Vagina (tissue), 2 donors: ENCODE measurements at regions of chr15 and their contacts with region 1.

Region 1: DNA sequence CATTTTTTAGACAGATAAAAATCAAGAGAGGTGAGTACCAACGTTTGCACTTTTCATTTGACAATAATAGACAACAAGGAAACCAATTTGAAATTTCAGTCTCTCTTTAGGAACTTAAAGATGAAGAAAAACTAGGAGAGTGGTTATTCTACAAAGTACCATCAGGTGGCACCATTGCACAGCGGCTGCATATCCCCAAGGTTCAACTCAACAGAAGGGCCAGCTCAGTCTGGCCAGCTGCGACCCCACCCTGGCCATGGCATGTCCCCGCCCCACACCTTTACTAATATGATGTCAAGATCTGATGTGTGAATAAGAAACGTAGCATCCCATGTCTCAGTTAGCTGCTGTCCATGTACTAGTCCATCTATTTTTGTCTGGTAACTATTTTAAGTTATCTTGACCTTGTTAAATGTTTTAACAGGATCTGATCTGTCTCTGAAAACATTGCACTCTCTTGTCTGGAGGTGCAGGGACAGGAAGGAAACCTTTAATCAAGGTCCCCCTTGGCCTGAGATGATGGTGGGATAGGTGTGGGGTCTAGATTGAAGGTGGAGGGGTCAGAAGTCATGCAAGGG is 35.5 kb upstream of the CGNL1 start:
- DNase-seq: no peak
- H3K4me3 ChIP-seq: no peak overlapping the region
- H3K27ac ChIP-seq: no peak overlapping the region
- H3K4me1 ChIP-seq: no peaks in the 10 kb centered on the region
- H3K27me3 ChIP-seq: no peaks in the 10 kb centered on the region
- CTCF ChIP-seq: peak; percentile 59 to 82 (median 74)
- POLR2A ChIP-seq: no peak

Region 2: DNA sequence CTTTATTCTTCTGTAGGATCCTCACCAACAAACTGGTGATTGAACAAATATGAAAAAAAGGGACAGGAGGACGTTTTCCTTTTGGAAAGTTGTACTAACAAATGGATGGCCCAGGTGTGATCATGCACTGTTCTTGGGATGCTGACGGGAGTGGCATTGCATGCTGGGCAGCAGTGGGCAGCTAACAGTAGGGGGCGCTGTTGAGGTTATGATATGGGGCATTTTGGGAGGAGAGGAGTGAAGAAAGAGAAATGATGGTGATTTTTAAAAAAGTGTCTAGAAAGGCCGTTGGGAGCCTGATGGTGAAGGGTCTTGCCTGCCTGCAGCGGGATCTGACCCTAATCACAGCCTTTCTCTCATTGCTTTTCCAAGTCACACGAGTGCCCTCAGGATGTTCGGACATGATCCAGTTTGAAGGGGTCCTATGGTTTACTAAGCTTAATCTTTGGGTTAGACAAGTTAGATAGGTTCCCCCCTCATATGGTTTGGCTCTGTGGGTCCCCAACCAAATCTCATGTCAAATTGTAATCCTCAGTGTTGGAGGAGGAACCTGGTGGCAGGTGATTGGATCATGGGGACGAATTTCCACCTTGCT is 1551.6 kb before region 1 on chr15:
- intact Hi-C with region 1: no loop called
- DNase-seq: no peak
- H3K4me3 ChIP-seq: no peak overlapping the region
- H3K27ac ChIP-seq: no peak overlapping the region
- H3K4me1 ChIP-seq: no peaks in the 10 kb centered on the region
- H3K27me3 ChIP-seq: no peaks in the 10 kb centered on the region
- CTCF ChIP-seq: no peak
- POLR2A ChIP-seq: no peak

Region 3: GRCh38 chr15:57522148-57522547 is 181.4 kb after region 1 on chr15:
- intact Hi-C with region 1: loop called (anchors 5 kb)
- DNase-seq: no peak
- H3K4me3 ChIP-seq: no peak overlapping the region
- H3K27ac ChIP-seq: no peak overlapping the region
- H3K4me1 ChIP-seq: peaks cover 20% of the 10 kb centered on the region
- H3K27me3 ChIP-seq: no peaks in the 10 kb centered on the region
- CTCF ChIP-seq: no peak
- POLR2A ChIP-seq: no peak